ENCODE measurements at regions of chr6 and their contacts with region 1.

Region 1: DNA sequence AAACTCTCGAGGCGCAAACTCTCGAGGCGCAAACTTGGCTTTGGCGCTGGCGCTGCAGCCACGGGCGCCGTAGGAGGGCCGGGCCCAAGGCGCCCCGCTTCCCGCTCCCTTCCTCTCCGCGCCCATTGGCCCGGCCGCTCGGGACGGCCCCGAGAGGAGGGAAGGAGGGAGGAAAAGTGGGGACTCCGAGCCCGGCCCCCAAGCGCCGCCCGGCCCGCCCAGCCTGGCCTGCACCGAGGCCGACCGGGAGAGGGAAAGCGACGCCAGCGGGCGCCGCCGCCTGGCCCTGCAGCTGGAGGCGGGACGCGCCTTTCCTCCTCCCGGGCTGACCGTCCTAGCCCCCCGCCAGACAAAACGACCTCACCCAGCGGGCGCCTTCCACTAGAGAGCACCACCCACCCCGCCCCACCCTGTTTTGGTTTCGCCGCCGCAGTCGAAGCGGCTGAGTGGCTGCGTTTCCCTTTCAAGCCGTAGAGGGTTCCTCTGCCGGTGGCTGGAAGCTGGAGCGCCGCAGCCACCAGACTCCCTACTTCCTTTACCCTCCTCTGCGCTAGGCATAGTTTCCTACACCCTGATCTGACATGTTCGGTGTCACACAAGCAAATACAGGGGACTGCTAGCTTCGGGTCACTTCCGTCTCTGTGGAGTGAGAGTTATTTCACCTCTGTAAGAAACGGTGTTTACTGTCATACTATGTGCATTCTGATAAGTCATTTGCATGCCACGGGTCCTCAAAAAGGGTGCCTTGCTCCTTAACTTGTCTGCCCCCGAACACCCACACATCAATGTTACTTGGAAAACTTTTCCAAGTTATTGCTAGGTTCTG is at the start of gene MBOAT1:
- DNase-seq: peak; percentile 81
- H3K4me3 Mint-ChIP-seq: peak within 1 kb of the TSS; percentile 86
- H3K27ac Mint-ChIP-seq: peak within 1 kb of the TSS; percentile 90
- H3K4me1 Mint-ChIP-seq: peaks cover 35% of the 10 kb centered on the region
- H3K27me3 Mint-ChIP-seq: no peaks in the 10 kb centered on the region
- total RNA-seq, gene MBOAT1: 13.4 to 14.0 TPM

Region 2: GRCh38 chr6:20126789-20127653 is 85.6 kb before region 1 on chr6:
- CTCF ChIA-PET with region 1: interaction called, 12 read pairs
- POLR2A ChIA-PET with region 1: no interaction called
- intact Hi-C with region 1: loop called (anchors 5 kb)
- DNase-seq: peak; percentile 69
- H3K4me3 Mint-ChIP-seq: no peak overlapping the region
- H3K27ac Mint-ChIP-seq: no peak overlapping the region
- H3K4me1 Mint-ChIP-seq: peaks cover 4% of the 10 kb centered on the region
- H3K27me3 Mint-ChIP-seq: no peaks in the 10 kb centered on the region

Region 3: GRCh38 chr6:20159781-20160540 is 52.6 kb before region 1 on chr6:
- CTCF ChIA-PET with region 1: no interaction called
- POLR2A ChIA-PET with region 1: no interaction called
- intact Hi-C with region 1: no loop called
- DNase-seq: no peak
- H3K4me3 Mint-ChIP-seq: no peak overlapping the region
- H3K27ac Mint-ChIP-seq: no peak overlapping the region
- H3K4me1 Mint-ChIP-seq: peaks cover 5% of the 10 kb centered on the region
- H3K27me3 Mint-ChIP-seq: no peaks in the 10 kb centered on the region

Region 4: GRCh38 chr6:20173833-20174792 is 38.5 kb before region 1 on chr6:
- CTCF ChIA-PET with region 1: no interaction called
- POLR2A ChIA-PET with region 1: no interaction called
- intact Hi-C with region 1: loop called (anchors 5 kb)
- DNase-seq: no peak
- H3K4me3 Mint-ChIP-seq: no peak overlapping the region
- H3K27ac Mint-ChIP-seq: no peak overlapping the region
- H3K4me1 Mint-ChIP-seq: peaks cover 23% of the 10 kb centered on the region
- H3K27me3 Mint-ChIP-seq: no peaks in the 10 kb centered on the region

Region 5: DNA sequence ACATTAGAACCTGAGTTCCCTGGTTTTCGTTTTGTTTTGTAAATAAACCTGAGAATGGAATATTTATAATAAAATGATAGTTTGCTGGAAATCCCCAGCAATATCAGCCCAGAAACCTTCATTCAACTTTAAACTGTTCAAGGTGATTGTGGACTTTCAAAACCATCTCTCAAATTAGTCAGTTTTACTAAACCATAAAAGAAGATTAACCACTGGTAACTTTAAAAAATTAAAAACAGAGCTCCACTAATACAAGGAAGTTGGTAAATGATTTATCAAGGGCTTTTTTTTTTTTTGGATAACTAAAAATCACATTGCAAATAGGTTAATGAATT is 10.3 kb before region 1 on chr6:
- CTCF ChIA-PET with region 1: interaction called, 8 read pairs
- POLR2A ChIA-PET with region 1: interaction called, 4 read pairs
- intact Hi-C with region 1: loop called (anchors 1 kb)
- DNase-seq: no peak
- H3K4me3 Mint-ChIP-seq: no peak overlapping the region
- H3K27ac Mint-ChIP-seq: no peak overlapping the region
- H3K4me1 Mint-ChIP-seq: peaks cover 56% of the 10 kb centered on the region
- H3K27me3 Mint-ChIP-seq: no peaks in the 10 kb centered on the region

Region 6: GRCh38 chr6:20266851-20267608 is 54.4 kb after region 1 on chr6:
- CTCF ChIA-PET with region 1: no interaction called
- POLR2A ChIA-PET with region 1: no interaction called
- intact Hi-C with region 1: loop called (anchors 2 kb)
- DNase-seq: peak; percentile 50
- H3K4me3 Mint-ChIP-seq: no peak overlapping the region
- H3K27ac Mint-ChIP-seq: peak overlapping the region; percentile 4
- H3K4me1 Mint-ChIP-seq: peaks cover 7% of the 10 kb centered on the region
- H3K27me3 Mint-ChIP-seq: no peaks in the 10 kb centered on the region

Region 7: GRCh38 chr6:20366091-20366832 is 153.7 kb after region 1 on chr6:
- CTCF ChIA-PET with region 1: no interaction called
- POLR2A ChIA-PET with region 1: no interaction called
- intact Hi-C with region 1: loop called (anchors 5 kb)
- DNase-seq: peak; percentile 45
- H3K4me3 Mint-ChIP-seq: peak overlapping the region; percentile 45
- H3K27ac Mint-ChIP-seq: peak overlapping the region; percentile 83
- H3K4me1 Mint-ChIP-seq: peaks cover 53% of the 10 kb centered on the region
- H3K27me3 Mint-ChIP-seq: no peaks in the 10 kb centered on the region

Region 8: GRCh38 chr6:20534295-20535262 is 322.0 kb after region 1 on chr6 and contains the start of gene CDKAL1:
- CTCF ChIA-PET with region 1: interaction called, 4 read pairs
- POLR2A ChIA-PET with region 1: no interaction called
- intact Hi-C with region 1: loop called (anchors 2 kb)
- DNase-seq: peak; percentile 96
- H3K4me3 Mint-ChIP-seq: peak within 1 kb of the TSS; percentile 99
- H3K27ac Mint-ChIP-seq: peak within 1 kb of the TSS; percentile 97
- H3K4me1 Mint-ChIP-seq: peaks cover 34% of the 10 kb centered on the region
- H3K27me3 Mint-ChIP-seq: peaks cover 3% of the 10 kb centered on the region
- total RNA-seq, gene CDKAL1: 23.1 to 23.2 TPM

Measured in activated CD4-positive, alpha-beta memory T cell treated with anti-CD3 and anti-CD28 coated beads for 36 hours (primary cell).